WTC11 (cell line): ENCODE measurements at regions of chr17 and their contacts with region 1.

Region 1: GRCh38 chr17:74748529-74749365 is at the start of gene NHERF1:
- DNase-seq: peak; percentile 61
- ATAC-seq: peak; percentile 86
- H3K4me3 Mint-ChIP-seq: peak within 1 kb of the TSS; percentile 92
- H3K27ac Mint-ChIP-seq: peak within 1 kb of the TSS; percentile 57
- H3K4me1 Mint-ChIP-seq: peaks cover 64% of the 10 kb centered on the region
- H3K27me3 Mint-ChIP-seq: peaks cover 3% of the 10 kb centered on the region; the same call in 1 of the 2 replicates
- CTCF ChIP-seq: no peak
- total RNA-seq, gene NHERF1: 86.9 to 111 TPM (median 97.1 TPM) in 3 replicates

Region 2: GRCh38 chr17:74592087-74592990 is 156.4 kb before region 1 on chr17 and contains the start of gene CD300LD:
- CTCF ChIA-PET with region 1: no interaction called
- POLR2A ChIA-PET with region 1: interaction called, 11 read pairs
- DNase-seq: no peak
- ATAC-seq: no peak
- H3K4me3 Mint-ChIP-seq: no peak within 1 kb of the TSS
- H3K27ac Mint-ChIP-seq: no peak within 1 kb of the TSS
- H3K4me1 Mint-ChIP-seq: no peaks in the 10 kb centered on the region
- H3K27me3 Mint-ChIP-seq: peaks cover 17% of the 10 kb centered on the region
- CTCF ChIP-seq: no peak
- total RNA-seq, gene CD300LD: not detected in 3 replicates

Region 3: DNA sequence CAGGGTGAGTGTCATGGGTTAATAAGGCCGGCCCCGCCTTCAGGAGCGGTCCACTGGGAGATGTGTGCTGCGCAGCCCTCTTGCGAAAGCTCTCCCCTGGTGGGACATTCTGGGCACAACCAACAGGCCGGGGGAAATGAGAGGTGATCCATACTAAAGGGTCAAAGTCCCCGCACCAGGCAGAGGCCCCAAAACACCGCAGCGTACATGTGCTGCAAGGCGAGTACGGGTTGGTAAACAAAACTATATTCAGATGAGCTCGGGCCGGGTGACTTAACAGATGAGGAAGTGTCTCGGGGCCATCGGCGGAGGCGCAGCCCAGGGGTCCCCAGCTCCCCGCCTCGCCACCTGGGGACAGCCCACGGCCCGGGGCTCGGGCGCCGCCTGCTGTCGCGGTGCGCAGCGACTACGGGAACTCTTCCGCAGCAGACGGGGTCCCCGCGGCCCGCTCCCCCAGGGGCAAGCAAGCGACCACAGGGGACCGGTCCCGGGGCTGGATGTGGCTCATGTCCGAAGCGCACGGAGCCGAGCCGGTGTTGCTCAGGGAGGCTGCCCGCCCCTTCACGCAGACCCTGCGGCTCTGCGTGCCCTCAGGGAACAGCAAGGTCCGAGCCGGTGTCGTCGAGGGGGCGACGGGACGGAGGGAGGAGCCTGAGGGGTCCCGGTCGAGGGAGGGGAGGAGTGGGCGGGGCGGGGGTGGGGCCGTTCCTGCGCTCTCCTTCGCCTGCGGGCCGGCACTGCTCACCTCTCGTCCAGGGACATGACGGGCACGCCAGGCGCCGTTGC is 12.0 kb before region 1 on chr17 and contains the start of gene RAB37:
- CTCF ChIA-PET with region 1: interaction called, 86 read pairs
- POLR2A ChIA-PET with region 1: interaction called, 7 read pairs
- DNase-seq: peak; percentile 70
- ATAC-seq: peak; percentile 58
- H3K4me3 Mint-ChIP-seq: peak within 1 kb of the TSS; percentile 81
- H3K27ac Mint-ChIP-seq: peak within 1 kb of the TSS; percentile 22; the same call in 1 of the 2 replicates
- H3K4me1 Mint-ChIP-seq: peaks cover 27% of the 10 kb centered on the region
- H3K27me3 Mint-ChIP-seq: peaks cover 18% of the 10 kb centered on the region
- CTCF ChIP-seq: no peak
- total RNA-seq, gene RAB37: 8.8 to 9.4 TPM (median 8.9 TPM) in 3 replicates

Region 4: DNA sequence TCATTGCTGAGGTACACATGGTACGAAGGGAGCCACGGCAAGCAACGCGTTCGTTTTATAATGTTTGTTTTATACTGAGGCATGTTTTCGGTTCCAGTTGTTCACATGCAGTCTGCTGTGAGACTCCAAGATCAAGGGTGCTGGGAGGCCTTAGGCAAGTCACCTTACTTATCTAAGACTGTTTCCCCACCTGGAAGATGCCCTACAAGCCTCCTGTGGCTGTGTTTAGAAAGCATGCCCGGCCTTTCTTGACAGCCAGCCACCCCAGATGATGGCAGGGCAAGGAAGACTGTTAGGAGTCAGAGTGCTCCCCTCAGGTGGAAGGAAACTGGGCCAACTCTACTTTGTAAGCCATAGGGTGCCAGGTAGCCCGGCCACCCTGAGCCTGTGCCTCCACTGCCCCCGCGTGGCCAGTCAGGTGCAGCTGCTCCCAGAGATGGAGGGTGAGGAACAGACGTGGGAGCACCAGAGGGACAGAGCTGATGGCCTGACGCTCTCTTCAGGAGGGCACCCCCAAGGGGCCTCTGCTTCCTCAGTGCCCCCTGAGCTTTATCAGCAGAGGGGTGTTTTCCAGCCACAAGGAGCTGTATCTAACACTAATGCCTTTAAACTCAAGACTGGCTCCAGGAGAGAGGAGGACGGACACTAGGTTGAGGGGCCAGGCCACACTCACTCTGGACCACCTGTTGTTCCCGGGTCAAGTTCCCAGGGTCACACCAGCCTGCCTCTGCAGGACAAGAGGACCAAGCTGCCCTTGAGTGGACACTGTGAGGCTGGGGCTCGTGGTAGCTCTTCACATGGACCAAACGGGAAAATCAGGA is 22.0 kb after region 1 on chr17:
- CTCF ChIA-PET with region 1: interaction called, 262 read pairs
- POLR2A ChIA-PET with region 1: interaction called, 14 read pairs
- DNase-seq: peak; percentile 78
- ATAC-seq: peak; percentile 91
- H3K4me3 Mint-ChIP-seq: no peak overlapping the region
- H3K27ac Mint-ChIP-seq: no peak overlapping the region; the same call in none of the 2 replicates
- H3K4me1 Mint-ChIP-seq: peaks cover 9% of the 10 kb centered on the region
- H3K27me3 Mint-ChIP-seq: no peaks in the 10 kb centered on the region
- CTCF ChIP-seq: peak; percentile 46; the same call in 1 of the 2 replicates

Region 5: GRCh38 chr17:74785096-74785980 is 36.6 kb after region 1 on chr17:
- CTCF ChIA-PET with region 1: interaction called, 39 read pairs
- POLR2A ChIA-PET with region 1: interaction called, 5 read pairs
- DNase-seq: no peak
- ATAC-seq: no peak
- H3K4me3 Mint-ChIP-seq: no peak overlapping the region
- H3K27ac Mint-ChIP-seq: no peak overlapping the region; the same call in 1 of the 2 replicates
- H3K4me1 Mint-ChIP-seq: peaks cover 26% of the 10 kb centered on the region
- H3K27me3 Mint-ChIP-seq: no peaks in the 10 kb centered on the region
- CTCF ChIP-seq: no peak

Region 6: GRCh38 chr17:74842599-74843351 is 94.0 kb after region 1 on chr17:
- CTCF ChIA-PET with region 1: interaction called, 16 read pairs
- POLR2A ChIA-PET with region 1: no interaction called
- DNase-seq: peak; percentile 75
- ATAC-seq: peak; percentile 81
- H3K4me3 Mint-ChIP-seq: peak overlapping the region; percentile 22; the same call in 1 of the 2 replicates
- H3K27ac Mint-ChIP-seq: no peak overlapping the region
- H3K4me1 Mint-ChIP-seq: peaks cover 21% of the 10 kb centered on the region
- H3K27me3 Mint-ChIP-seq: peaks cover 52% of the 10 kb centered on the region
- CTCF ChIP-seq: no peak

Region 7: DNA sequence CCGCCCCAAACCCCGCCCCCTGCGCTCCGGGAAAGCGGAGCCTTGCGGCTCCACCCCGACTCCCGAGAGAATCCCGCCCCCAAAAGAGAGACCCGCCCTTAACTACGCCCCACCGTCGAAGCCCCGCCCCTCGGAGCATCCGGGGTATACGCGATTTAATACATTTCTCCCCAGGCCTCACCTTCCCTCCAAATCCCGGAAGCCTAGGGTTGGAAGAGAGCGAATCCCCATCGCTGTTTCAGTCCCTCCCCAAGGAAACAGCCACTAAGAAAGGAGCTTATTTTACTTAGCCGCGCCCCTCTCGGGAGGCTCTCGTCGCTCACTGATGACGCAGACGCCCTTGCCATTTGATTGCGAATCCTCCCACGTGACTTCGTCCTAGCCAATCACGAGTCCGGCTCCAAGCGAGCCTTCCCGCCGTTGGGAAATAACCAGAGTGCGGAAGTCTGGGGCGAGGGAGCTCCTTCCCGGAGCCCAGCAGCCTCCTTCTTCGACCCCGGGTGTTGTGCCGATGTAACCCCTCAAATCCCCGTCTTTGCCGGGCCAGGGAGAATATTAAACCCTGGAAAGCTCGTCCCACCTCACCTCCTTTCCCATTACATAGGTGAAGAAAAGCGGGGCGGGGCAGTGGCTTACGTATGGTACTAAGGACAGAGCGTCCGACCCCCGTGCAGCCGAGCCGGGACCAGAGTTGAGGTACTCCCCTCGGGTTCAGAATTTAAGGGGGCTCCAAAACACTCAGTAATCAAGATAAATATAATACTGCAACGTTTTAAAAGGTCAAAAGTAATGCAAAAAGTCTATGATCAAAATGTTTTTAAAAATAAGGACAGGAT is 124.5 kb after region 1 on chr17:
- CTCF ChIA-PET with region 1: interaction called, 21 read pairs
- POLR2A ChIA-PET with region 1: interaction called, 3 read pairs
- DNase-seq: peak; percentile 99
- ATAC-seq: peak; percentile 91
- H3K4me3 Mint-ChIP-seq: peak overlapping the region; percentile 81
- H3K27ac Mint-ChIP-seq: peak overlapping the region; percentile 98
- H3K4me1 Mint-ChIP-seq: peaks cover 22% of the 10 kb centered on the region
- H3K27me3 Mint-ChIP-seq: peaks cover 8% of the 10 kb centered on the region
- CTCF ChIP-seq: no peak

Region 8: DNA sequence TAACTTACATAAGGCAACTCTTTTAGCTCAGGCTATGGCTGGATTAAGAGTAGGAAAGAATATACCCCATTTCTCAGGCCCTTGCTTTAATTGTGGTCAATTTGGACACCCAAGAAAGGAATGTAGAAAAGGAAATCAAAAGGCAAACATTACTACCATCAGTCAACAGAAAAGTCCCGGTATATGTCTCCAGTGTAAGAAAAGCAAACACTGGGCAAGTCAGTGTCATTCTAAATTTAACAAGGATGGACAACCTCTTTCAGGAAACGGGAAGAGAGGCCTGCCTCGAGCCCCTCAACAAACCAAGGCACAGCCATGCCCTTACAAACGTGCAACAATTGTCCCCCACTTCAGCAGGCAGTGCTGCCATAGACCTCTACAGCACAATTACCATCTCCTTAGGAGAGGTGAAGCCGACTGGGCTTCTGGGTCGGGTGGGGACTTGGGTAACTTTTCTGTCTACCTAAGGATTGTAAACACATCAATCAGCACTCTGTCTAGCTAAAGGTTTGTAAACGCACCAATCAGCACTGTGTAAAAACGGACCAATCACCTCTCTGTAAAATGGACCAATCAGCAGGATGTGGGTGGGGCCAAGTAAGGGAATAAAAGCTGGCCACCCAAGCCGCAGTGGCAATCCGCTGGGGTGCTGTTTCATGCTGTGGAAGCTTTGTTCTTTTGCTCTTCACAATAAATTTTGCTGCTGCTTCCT is 276.1 kb after region 1 on chr17:
- CTCF ChIA-PET with region 1: no interaction called
- POLR2A ChIA-PET with region 1: no interaction called
- DNase-seq: no peak
- ATAC-seq: no peak
- H3K4me3 Mint-ChIP-seq: no peak overlapping the region
- H3K27ac Mint-ChIP-seq: no peak overlapping the region
- H3K4me1 Mint-ChIP-seq: no peaks in the 10 kb centered on the region
- H3K27me3 Mint-ChIP-seq: peaks cover 9% of the 10 kb centered on the region
- CTCF ChIP-seq: no peak